ENCODE measurements at regions of chr19 and their contacts with region 1.

Region 1: DNA sequence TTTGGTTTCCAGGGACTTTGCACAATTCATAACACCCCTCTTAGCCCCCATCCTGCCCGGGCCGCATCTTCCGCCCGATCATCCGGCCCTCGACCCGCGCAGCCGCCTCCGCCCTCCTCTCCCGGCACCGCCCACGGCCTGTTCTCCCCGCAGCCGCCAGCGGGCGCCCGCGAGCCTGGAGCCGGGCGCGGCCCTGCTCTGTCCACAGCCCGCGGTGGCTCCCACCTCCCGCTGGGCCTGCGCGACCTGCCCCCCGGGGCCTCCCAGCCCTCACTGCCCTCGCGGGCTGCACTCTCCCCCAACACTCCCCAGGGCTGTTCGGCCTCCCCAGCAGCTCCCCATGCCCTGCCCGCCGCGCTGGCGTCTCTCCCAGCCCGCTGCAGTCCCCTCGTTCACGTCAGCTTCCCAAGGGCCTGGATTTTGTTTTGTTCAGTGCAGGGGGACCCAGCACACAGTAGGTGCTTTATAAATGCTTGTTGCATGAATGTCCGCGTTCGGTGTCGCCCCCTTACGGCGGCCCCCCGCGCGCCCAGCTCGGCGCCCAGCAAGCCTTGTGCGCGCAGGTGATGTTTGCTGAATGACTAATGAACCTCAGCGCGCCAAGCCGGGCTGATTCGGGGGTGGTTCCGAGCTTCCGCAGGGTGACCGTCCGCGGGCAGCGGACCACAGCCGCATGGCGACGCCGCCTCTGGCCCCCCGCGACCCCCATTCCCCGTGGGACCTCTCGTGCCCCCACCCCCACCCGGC is 4.6 kb upstream of the APC2 start:
- DNase-seq: peak; percentile 60 to 89 (median 70)
- ATAC-seq: peak; percentile 23 to 91 (median 88)
- H3K4me3 ChIP-seq: peak overlapping the region in 11 of 12 donors; percentile 16 to 53 (median 41)
- H3K27ac ChIP-seq: no peak overlapping the region
- H3K4me1 ChIP-seq: peaks cover 0 to 43% (median 15%) of the 10 kb centered on the region in 12 donors
- H3K27me3 ChIP-seq: peaks cover 36 to 52% (median 49%) of the 10 kb centered on the region in 9 donors
- CTCF ChIP-seq: peak; percentile 85 to 98 (median 94)
- POLR2A ChIP-seq: no peak

Region 2: GRCh38 chr19:1513499-1514294 is 68.3 kb after region 1 on chr19:
- intact Hi-C with region 1: loop called in 1 of 10 experiments (anchors 5 kb)
- DNase-seq: peak in 3 of 5 donors; percentile 56 to 84 (median 72)
- ATAC-seq: peak; percentile 19 to 60 (median 38)
- H3K4me3 ChIP-seq: peak overlapping the region; percentile 50 to 83 (median 60)
- H3K27ac ChIP-seq: peak overlapping the region; percentile 62 to 97 (median 88)
- H3K4me1 ChIP-seq: peaks cover 0 to 40% (median 7%) of the 10 kb centered on the region in 12 donors
- H3K27me3 ChIP-seq: peaks cover 0 to 35% (median 5%) of the 10 kb centered on the region in 9 donors
- CTCF ChIP-seq: peak in 11 of 12 donors; percentile 37 to 64 (median 61)
- POLR2A ChIP-seq: no peak

Region 3: DNA sequence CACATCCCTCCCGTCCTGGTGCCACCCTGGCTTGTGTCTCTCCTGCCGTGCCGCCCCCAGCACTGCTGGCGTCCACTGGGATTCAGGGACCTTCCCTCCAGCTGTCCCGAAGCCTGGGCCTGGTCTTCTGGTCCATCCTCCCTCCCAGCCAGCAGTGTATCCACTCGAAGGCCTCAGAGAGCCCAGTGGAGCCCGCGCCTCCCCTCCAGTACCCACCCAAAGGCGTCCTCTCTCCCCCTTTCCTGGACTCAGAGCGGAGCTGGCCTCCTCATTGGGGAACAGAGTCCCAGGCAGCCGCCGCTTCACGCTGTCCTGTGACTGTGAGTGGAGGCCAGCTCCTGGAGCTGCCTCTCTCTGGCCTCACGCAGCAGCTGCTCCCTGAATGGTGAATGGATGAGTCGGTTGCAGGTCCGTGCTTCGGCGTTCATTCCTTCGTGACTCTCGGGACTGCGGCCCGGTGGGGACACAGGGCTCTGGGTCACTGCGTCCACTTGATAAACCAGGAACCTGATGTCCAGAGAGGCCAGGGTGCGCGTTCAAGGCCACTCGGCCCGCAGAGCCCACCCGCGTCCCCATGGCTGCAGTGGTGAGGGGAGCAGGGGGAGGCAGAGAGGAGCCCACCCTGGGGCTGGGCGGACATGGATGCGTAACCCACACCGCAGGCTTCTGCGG is 320.0 kb after region 1 on chr19:
- intact Hi-C with region 1: no loop called
- DNase-seq: no peak
- ATAC-seq: no peak
- H3K4me3 ChIP-seq: no peak overlapping the region
- H3K27ac ChIP-seq: no peak overlapping the region
- H3K4me1 ChIP-seq: peaks cover 0 to 4% (median 0%) of the 10 kb centered on the region in 12 donors
- H3K27me3 ChIP-seq: peaks cover 69 to 100% (median 91%) of the 10 kb centered on the region in 9 donors
- CTCF ChIP-seq: no peak
- POLR2A ChIP-seq: no peak